Sigmoid colon (tissue), 7 donors: ENCODE measurements at regions of chr21 and their contacts with region 1.

Region 1: GRCh38 chr21:42117229-42117966 is 46.3 kb downstream of the UMODL1 start:
- DNase-seq: peak; percentile 85
- H3K4me3 ChIP-seq: peak overlapping the region in 1 of 4 donors; percentile 18
- H3K27ac ChIP-seq: no peak overlapping the region
- H3K4me1 ChIP-seq: peaks cover 0 to 8% (median 4%) of the 10 kb centered on the region in 4 donors
- H3K27me3 ChIP-seq: peaks cover 0 to 45% (median 10%) of the 10 kb centered on the region in 3 donors
- CTCF ChIP-seq: peak; percentile 86 to 96 (median 94)
- EP300 ChIP-seq: no peak
- POLR2A ChIP-seq: no peak

Region 2: DNA sequence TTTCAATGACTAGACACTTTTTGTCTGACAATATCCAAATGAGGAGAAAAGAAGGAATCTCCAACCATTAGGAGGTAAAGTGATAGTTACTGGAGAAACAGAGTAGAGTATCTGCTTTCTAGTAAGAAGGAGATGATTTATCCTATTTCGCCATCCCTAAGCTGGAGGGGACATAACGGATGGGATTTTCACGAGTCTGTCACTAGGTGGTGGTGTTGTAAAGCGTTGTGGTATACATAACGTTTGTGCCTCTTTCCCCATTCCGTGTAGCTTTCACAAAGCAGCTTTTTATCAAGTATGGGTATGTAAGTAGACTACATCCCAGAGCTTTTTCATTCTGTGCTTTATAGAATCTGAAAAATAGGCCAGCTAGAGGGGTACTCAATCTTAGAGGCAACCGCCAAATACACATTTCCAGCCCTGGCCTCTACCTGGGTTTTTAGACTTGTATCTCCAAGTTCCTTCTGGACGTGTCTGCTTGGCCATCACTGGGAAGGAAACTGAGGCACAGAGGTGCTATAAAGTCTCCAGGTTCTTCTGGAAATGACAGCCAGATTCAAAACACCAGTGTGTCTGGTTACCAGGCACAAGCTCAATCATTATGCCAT is 834.1 kb before region 1 on chr21:
- intact Hi-C with region 1: no loop called
- DNase-seq: no peak
- H3K4me3 ChIP-seq: no peak overlapping the region
- H3K27ac ChIP-seq: no peak overlapping the region
- H3K4me1 ChIP-seq: peaks cover 0 to 3% (median 0%) of the 10 kb centered on the region in 4 donors
- H3K27me3 ChIP-seq: peaks cover 0 to 5% (median 0%) of the 10 kb centered on the region in 3 donors
- CTCF ChIP-seq: peak; percentile 56 to 74 (median 65)
- EP300 ChIP-seq: no peak
- POLR2A ChIP-seq: no peak

Region 3: GRCh38 chr21:41816220-41817165 is 300.9 kb before region 1 on chr21:
- intact Hi-C with region 1: loop called (anchors 1 kb)
- DNase-seq: peak; percentile 82
- H3K4me3 ChIP-seq: no peak overlapping the region
- H3K27ac ChIP-seq: no peak overlapping the region
- H3K4me1 ChIP-seq: peaks cover 0 to 8% (median 3%) of the 10 kb centered on the region in 4 donors
- H3K27me3 ChIP-seq: no peaks in the 10 kb centered on the region
- CTCF ChIP-seq: peak in 3 of 4 experiments; percentile 51 to 80 (median 74)
- EP300 ChIP-seq: no peak
- POLR2A ChIP-seq: no peak

Region 4: GRCh38 chr21:41933313-41934086 is 183.9 kb before region 1 on chr21:
- intact Hi-C with region 1: loop called (anchors 5 kb)
- DNase-seq: peak; percentile 78
- H3K4me3 ChIP-seq: peak overlapping the region; percentile 3 to 44 (median 42)
- H3K27ac ChIP-seq: peak overlapping the region; percentile 53 to 90 (median 86)
- H3K4me1 ChIP-seq: peaks cover 0 to 32% (median 30%) of the 10 kb centered on the region in 4 donors
- H3K27me3 ChIP-seq: no peaks in the 10 kb centered on the region
- CTCF ChIP-seq: peak in 1 of 4 experiments; percentile 37
- EP300 ChIP-seq: no peak
- POLR2A ChIP-seq: no peak